Caco-2 (cell line): ENCODE measurements at regions of chr19 and their contacts with region 1.

Region 1: DNA sequence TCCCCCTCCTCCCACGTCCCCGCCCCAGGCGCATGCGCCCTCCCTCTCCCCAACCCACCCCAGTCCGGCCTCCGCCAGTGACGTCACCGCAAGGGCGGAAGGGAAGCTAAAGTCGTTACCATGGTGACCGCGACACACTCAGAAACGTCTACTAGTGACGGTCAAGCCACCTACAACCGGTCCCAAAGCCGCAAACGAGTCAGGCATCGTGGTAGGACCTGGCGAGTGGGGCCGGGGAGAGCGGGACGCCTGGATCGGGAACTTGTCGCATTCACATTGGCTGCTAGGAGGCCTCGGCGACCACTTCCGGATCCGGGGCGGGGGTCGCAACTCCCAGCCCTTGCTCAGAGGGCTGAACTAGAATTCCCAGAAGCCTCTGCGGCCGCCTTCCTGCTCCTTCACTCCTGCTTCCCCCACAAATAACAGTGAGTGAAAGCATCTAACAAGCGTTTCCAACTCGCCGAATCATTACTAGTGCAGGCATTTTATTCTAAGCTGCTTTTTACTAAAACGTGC is at the start of gene ZSCAN5A:
- DNase-seq: peak; percentile 95 to 97
- H3K4me3 ChIP-seq: peak within 1 kb of the TSS; percentile 66
- H3K4me3 Mint-ChIP-seq: peak within 1 kb of the TSS; percentile 86
- H3K27ac Mint-ChIP-seq: peak within 1 kb of the TSS; percentile 98
- H3K4me1 ChIP-seq: peaks cover 9% of the 10 kb centered on the region; the same call in 1 of the 2 replicates
- H3K4me1 Mint-ChIP-seq: peaks cover 12% of the 10 kb centered on the region
- H3K27me3 ChIP-seq: no peaks in the 10 kb centered on the region
- H3K27me3 Mint-ChIP-seq: no peaks in the 10 kb centered on the region
- CTCF ChIP-seq: no peak
- total RNA-seq, gene ZSCAN5A: 10.9 and 11.3 TPM in 2 replicates

Region 2: DNA sequence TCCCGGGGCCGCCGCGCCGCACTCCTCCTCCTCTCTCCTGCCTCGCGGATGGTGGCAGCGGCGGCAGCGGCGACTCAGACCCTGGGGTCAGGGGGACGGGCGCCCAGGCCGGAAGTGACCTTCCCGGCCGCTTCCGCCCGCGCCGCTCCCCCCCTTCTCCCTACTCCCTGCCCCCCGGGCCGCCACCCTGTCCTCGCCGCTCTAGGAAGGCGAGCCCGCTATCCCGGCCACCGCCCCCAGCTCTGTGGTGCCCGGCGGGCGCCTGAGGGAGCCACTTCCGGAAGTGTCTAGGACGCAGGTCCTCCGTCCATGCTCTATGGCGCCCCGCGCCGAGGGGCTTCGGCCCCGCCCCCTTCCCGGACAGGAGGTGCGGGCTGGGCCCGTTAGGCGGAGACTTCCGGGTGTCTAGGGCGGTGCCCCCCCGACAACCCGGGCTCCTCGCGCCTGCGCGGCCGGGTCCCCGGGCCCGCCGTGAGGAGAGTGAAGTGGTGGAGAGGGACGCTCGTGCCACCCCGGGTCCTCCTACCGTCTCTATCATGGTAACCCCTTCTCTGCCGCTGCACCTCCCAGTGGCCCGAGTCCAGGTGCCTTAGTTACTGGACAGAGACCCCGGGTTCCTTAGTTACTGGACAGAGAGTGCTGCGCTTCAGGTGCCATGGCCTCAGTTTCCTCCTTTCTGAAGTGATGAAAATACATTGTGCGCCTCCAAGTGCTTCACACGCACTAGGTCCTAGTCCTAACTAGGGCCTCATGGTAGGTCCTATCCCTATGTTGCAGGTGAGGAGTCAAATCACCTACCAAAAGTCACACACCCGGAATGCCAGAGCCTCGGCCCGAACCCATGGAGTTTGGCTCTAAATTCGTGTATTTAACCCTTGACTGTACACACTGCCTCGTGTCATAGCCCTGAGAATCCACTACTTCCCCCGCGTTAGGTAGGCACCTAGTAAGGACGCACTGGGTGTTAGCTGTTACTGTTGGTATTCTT is 193.1 kb before region 1 on chr19 and contains the start of gene ZNF787:
- CTCF ChIA-PET with region 1: interaction called, 3 read pairs
- POLR2A ChIA-PET with region 1: interaction called, 3 read pairs
- intact Hi-C with region 1: loop called (anchors 2 kb)
- DNase-seq: peak; percentile 99 to 100
- H3K4me3 ChIP-seq: peak within 1 kb of the TSS; percentile 97
- H3K4me3 Mint-ChIP-seq: peak within 1 kb of the TSS; percentile 89
- H3K27ac Mint-ChIP-seq: peak within 1 kb of the TSS; percentile 82
- H3K4me1 ChIP-seq: peaks cover 17% of the 10 kb centered on the region
- H3K4me1 Mint-ChIP-seq: peaks cover 12% of the 10 kb centered on the region
- H3K27me3 ChIP-seq: no peaks in the 10 kb centered on the region
- H3K27me3 Mint-ChIP-seq: no peaks in the 10 kb centered on the region
- CTCF ChIP-seq: no peak
- total RNA-seq, gene ZNF787: 58.1 and 60.0 TPM in 2 replicates

Region 3: DNA sequence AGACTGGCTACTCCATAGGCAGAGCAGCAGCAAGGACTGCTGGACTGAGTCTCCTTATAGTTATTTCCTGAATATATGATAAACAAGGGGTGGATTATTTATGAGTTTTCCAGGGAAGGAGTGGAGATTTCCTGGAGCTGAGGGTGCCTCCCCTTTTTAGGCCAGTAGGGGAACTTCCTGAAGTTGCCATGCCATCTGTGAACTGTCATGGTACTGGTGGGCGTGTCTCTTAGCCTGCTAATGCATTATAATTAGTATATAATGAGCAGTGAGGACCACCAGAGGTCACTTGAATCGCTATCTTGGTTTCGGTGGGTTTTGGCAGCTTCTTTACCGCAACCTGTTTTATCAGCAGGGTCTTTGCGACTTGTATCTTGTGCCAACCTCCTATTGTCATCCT is 13.4 kb before region 1 on chr19:
- CTCF ChIA-PET with region 1: no interaction called
- POLR2A ChIA-PET with region 1: no interaction called
- intact Hi-C with region 1: no loop called
- DNase-seq: no peak
- H3K4me3 ChIP-seq: no peak overlapping the region
- H3K4me3 Mint-ChIP-seq: no peak overlapping the region
- H3K27ac Mint-ChIP-seq: no peak overlapping the region
- H3K4me1 ChIP-seq: no peaks in the 10 kb centered on the region
- H3K4me1 Mint-ChIP-seq: no peaks in the 10 kb centered on the region
- H3K27me3 ChIP-seq: no peaks in the 10 kb centered on the region
- H3K27me3 Mint-ChIP-seq: no peaks in the 10 kb centered on the region
- CTCF ChIP-seq: no peak